HepG2 (cell line): ENCODE measurements at regions of chr6 and their contacts with region 1.

Region 1: DNA sequence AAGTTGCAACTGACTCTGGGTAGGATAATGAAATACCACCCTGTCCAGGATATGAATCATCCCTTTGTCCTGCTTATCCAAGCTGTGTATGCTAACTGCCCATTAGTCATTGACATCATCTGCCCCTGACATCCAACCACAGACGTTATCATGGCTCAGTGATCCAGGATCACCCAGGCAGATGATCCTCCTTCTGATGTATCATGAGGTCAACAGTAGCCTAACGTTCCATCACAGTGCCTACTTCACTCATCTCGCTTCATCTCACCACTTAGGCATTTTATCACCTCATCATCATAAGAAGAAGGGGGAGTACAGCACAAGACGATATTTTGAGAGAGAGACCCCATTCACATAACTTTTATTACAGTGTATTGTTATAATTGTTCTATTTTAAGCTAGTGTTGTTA is 13.4 kb upstream of the BTN3A2 start:
- DNase-seq: peak; percentile 95
- ATAC-seq: peak; percentile 77
- H3K4me3 ChIP-seq: no peak overlapping the region
- H3K27ac ChIP-seq: peak overlapping the region; percentile 89
- H3K4me1 ChIP-seq: peaks cover 89% of the 10 kb centered on the region
- H3K27me3 ChIP-seq: no peaks in the 10 kb centered on the region
- CTCF ChIP-seq: no peak
- EP300 ChIP-seq: peak in 1 of 2 experiments; percentile 48; a peak in 1 of 4 replicates
- POLR2A ChIP-seq: no peak
- RAD21 ChIP-seq: no peak

Region 2: GRCh38 chr6:26363882-26364701 is 12.5 kb after region 1 on chr6:
- CTCF ChIA-PET with region 1: no interaction called
- POLR2A ChIA-PET with region 1: interaction called, 13 read pairs
- in situ Hi-C with region 1: no loop called
- intact Hi-C with region 1: no loop called
- DNase-seq: no peak
- ATAC-seq: peak; percentile 31; the same call in 2 of the 3 replicates
- H3K4me3 ChIP-seq: peak overlapping the region; percentile 57 to 78 (median 66)
- H3K27ac ChIP-seq: peak overlapping the region; percentile 73
- H3K4me1 ChIP-seq: peaks cover 56% of the 10 kb centered on the region
- H3K27me3 ChIP-seq: no peaks in the 10 kb centered on the region; a peak in 1 of 5 replicates
- CTCF ChIP-seq: no peak
- EP300 ChIP-seq: no peak
- POLR2A ChIP-seq: no peak
- RAD21 ChIP-seq: no peak

Region 3: GRCh38 chr6:26383624-26384417 is 32.3 kb after region 1 on chr6:
- CTCF ChIA-PET with region 1: no interaction called
- POLR2A ChIA-PET with region 1: interaction called, 5 read pairs
- in situ Hi-C with region 1: no loop called
- intact Hi-C with region 1: loop called (anchors 2 kb)
- DNase-seq: no peak
- ATAC-seq: peak; percentile 46
- H3K4me3 ChIP-seq: peak overlapping the region; percentile 79 to 96 (median 85)
- H3K27ac ChIP-seq: peak overlapping the region; percentile 45
- H3K4me1 ChIP-seq: peaks cover 40% of the 10 kb centered on the region
- H3K27me3 ChIP-seq: no peaks in the 10 kb centered on the region
- CTCF ChIP-seq: no peak
- EP300 ChIP-seq: no peak
- POLR2A ChIP-seq: no peak
- RAD21 ChIP-seq: no peak